PC-9 (cell line): ENCODE measurements at regions of chr13 and their contacts with region 1.

Region 1: DNA sequence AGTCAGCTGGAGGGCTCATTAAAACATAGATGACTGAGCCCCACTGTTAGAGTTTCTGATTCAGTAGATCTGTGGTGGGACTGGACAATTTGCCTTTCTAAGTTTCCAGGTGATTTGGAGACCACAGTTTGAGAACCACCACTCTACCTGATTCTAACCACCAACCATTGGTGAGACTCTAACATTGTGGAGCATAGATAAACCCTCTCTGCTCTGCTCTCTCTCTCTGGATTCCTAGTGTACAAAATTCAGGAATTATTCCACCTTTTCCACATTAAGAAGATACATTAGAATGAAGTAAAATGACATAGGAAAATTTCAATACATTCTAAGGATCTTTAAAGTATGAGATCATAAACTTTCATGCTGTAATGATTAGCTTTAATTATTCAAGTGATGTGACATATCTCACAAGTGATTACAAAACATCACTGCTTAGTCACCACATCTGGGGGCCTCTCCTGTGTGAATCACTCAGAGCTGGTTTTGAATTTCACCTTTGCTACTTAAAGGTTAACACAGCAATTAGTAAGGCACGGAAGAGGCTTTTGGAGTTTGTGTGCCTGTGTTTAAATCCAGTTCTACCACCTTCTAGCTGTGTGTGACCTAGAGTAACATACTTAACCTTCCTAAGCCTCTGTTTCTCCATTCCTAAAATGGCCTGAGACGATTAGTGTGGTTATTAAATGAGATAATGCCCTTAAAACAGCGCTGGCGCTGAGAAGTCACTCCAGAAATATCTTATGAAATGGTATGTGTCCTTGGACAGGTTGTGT is 78.5 kb upstream of the NBEA start:
- DNase-seq: peak; percentile 42 to 98
- H3K4me3 ChIP-seq: peak overlapping the region; percentile 8; the same call in 1 of the 2 replicates
- H3K27ac ChIP-seq: peak overlapping the region; percentile 71
- H3K4me1 ChIP-seq: peaks cover 41% of the 10 kb centered on the region
- H3K27me3 ChIP-seq: no peaks in the 10 kb centered on the region
- CTCF ChIP-seq: no peak

Region 2: DNA sequence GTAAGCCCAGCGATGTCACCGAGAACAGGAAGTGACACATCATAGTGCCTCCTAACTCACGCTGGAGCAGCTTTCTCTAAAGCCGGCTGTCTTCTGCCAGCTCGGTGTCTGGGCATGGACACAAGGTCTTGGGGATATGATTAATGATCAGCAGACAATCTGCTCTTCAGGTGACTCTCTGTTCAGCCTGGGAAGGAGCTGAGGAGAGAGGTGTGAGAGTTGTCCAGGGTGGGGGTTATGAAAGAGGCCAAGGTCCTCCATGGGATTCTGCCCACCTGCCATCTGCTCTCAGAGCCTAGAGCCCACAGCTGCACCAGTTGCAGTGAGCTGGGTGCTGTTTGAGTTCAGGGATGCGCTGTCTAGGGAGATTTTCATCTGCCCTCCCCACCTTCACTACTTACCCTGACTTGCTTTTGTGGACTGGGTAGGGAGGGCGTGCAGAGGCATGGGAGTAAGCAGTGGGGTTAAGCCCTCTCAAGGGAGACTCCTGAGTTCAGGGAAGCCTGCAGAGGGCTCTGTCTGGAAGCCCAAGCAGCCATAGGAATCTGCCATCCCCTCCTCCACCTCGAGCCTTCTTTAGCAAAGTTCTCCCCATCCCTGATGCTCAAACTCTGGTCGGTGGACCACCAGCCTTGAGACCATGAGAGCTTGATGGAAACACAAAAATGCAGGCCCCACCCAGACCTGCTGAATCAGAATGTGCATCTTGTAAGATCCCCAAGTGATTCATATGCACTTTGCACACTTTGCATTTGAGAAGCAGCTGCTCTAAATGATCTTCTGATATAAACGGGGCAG is 505.9 kb before region 1 on chr13:
- CTCF ChIA-PET with region 1: no interaction called
- POLR2A ChIA-PET with region 1: no interaction called
- intact Hi-C with region 1: loop called (anchors 5 kb)
- DNase-seq: peak; percentile 25 to 76
- H3K4me3 ChIP-seq: no peak overlapping the region
- H3K27ac ChIP-seq: peak overlapping the region; percentile 87
- H3K4me1 ChIP-seq: peaks cover 47% of the 10 kb centered on the region
- H3K27me3 ChIP-seq: no peaks in the 10 kb centered on the region
- CTCF ChIP-seq: no peak

Region 3: DNA sequence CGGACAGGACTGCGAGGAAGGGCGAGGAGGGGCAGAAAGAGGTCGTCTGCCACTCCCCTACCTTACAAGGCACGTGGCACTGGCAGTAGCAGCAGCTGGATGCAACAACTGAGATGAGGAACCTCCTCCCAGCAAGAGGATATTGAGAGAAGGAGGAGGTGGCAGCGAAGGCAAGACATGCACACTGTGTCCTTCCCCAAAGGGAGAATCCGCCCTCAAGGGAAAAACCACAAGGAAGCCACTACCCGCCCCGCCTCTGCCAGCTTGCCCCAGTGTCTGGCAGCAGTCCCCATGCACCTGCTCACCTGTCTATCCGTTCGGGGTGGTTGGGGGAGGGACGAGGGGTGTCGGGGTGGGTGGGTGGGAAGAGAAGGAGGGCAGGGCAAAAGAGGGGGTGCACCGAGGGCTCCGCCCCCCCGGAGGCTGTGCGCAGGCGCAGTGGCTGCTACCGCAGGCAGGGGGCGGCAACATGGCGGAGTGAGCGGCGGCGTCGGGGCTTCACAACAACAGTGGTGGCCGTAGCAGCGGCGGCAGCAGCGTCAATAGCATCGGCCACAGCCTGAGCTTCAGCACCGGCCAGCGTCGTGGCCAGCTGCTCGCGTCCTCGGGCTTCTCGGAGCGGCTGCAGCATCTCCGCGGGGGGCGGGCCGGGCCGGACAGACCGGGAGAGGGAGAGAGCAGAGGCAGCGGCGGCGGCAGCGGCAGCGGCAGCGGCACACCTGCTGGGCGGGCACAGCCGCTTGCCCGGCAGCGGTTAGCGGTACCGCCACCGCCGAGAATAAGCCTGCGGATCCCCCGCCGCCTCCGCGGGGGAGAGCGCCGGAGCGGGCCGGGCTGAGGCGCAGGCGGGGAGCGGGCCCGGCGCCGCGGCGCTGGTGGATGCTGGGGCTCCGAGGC is 78.5 kb after region 1 on chr13 and contains the start of gene NBEA:
- CTCF ChIA-PET with region 1: no interaction called
- POLR2A ChIA-PET with region 1: interaction called, 21 read pairs
- intact Hi-C with region 1: no loop called
- DNase-seq: peak; percentile 82 to 83
- H3K4me3 ChIP-seq: peak within 1 kb of the TSS; percentile 71
- H3K27ac ChIP-seq: no peak within 1 kb of the TSS
- H3K4me1 ChIP-seq: peaks cover 39% of the 10 kb centered on the region
- H3K27me3 ChIP-seq: no peaks in the 10 kb centered on the region
- CTCF ChIP-seq: peak; percentile 45; the same call in 1 of the 2 replicates
- total RNA-seq, gene NBEA: 4.0 and 4.5 TPM in 2 replicates

Region 4: GRCh38 chr13:36297366-36298338 is 1434.1 kb after region 1 on chr13 and contains the start of gene CCDC169:
- CTCF ChIA-PET with region 1: no interaction called
- POLR2A ChIA-PET with region 1: no interaction called
- intact Hi-C with region 1: no loop called
- DNase-seq: peak; percentile 64 to 83
- H3K4me3 ChIP-seq: peak within 1 kb of the TSS; percentile 61
- H3K27ac ChIP-seq: peak within 1 kb of the TSS; percentile 82
- H3K4me1 ChIP-seq: peaks cover 34% of the 10 kb centered on the region
- H3K27me3 ChIP-seq: no peaks in the 10 kb centered on the region
- CTCF ChIP-seq: no peak
- total RNA-seq, gene CCDC169: 6.5 and 6.9 TPM in 2 replicates